ENCODE measurements at regions of chr3 and their contacts with region 1.

Region 1: DNA sequence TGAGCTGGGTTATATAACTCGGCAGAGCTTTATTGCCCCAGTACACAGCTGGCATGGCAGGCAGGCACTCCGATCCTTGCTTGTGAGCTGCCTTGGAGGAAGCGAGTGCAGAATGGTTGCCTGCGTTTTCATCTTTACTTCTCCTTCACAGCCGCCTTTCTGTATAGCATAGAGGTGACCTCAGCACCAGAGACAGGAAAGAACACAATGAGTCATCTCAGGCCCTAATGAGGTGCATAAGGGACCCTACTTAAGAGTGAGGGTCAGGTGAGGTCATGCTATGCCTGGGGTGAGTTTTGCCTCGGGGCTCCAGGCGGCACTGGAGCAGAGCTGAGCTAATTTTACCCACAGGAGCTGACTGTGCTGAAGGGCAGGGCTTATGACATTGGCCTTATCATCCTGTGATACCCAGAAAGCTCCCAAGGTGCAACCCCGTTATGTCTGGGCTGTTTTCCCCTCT is 43.5 kb downstream of the LPP start:
- H3K4me3 Mint-ChIP-seq: no peak overlapping the region
- H3K27ac Mint-ChIP-seq: peak overlapping the region; percentile 82
- H3K4me1 Mint-ChIP-seq: peaks cover 91% of the 10 kb centered on the region
- H3K27me3 Mint-ChIP-seq: no peaks in the 10 kb centered on the region

Region 2: GRCh38 chr3:187745201-187746058 is 452.0 kb before region 1 on chr3 and contains the start of gene BCL6:
- intact Hi-C with region 1: no loop called
- H3K4me3 Mint-ChIP-seq: peak within 1 kb of the TSS; percentile 87
- H3K27ac Mint-ChIP-seq: peak within 1 kb of the TSS; percentile 100
- H3K4me1 Mint-ChIP-seq: peaks cover 49% of the 10 kb centered on the region
- H3K27me3 Mint-ChIP-seq: no peaks in the 10 kb centered on the region

Region 3: GRCh38 chr3:188133219-188133618 is 64.2 kb before region 1 on chr3:
- intact Hi-C with region 1: no loop called
- H3K4me3 Mint-ChIP-seq: no peak overlapping the region
- H3K27ac Mint-ChIP-seq: no peak overlapping the region
- H3K4me1 Mint-ChIP-seq: peaks cover 18% of the 10 kb centered on the region
- H3K27me3 Mint-ChIP-seq: no peaks in the 10 kb centered on the region

Region 4: DNA sequence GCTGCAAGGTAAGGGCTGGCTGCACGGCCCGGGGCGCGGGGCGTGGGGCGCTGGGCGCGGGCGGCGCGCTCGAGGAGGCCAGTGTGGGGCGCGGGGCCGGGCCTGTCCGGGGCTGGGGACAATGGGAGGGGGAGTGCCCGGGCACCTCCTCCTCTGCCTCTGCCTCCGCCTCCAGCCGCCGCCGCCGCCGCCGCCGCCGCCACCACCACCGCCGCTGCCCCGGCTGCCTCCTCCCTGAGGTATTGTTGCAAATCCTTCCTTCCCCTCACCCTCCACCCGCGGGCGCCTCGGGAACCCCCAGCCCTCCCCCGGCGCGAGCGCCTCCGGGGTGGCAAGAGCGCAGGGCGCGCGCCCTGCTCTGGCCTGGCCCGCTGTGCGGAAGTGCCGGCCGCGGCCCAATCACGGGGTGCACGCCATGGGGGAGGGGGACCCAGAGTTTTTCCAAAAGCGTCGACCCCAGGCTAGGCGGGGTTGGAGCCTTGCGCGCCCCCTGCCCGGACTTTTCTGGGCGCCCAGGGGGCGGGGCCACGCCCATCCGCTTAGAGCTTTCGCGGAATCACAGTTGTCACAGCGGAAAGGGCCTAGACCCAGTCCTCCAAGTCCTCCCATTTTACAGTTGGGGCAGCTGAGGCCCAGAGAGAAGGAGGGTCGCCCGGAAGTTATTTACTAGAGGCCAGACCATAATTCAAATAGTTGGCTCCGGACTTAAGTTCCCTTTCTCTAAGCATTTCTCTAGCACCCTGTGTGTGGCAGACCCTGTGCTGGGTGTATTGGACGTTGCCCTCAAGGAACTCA is 43.2 kb before region 1 on chr3 and contains the start of gene LPP:
- intact Hi-C with region 1: loop called (anchors 5 kb)
- H3K4me3 Mint-ChIP-seq: peak within 1 kb of the TSS; percentile 99
- H3K27ac Mint-ChIP-seq: peak within 1 kb of the TSS; percentile 97
- H3K4me1 Mint-ChIP-seq: peaks cover 59% of the 10 kb centered on the region
- H3K27me3 Mint-ChIP-seq: no peaks in the 10 kb centered on the region

Region 5: DNA sequence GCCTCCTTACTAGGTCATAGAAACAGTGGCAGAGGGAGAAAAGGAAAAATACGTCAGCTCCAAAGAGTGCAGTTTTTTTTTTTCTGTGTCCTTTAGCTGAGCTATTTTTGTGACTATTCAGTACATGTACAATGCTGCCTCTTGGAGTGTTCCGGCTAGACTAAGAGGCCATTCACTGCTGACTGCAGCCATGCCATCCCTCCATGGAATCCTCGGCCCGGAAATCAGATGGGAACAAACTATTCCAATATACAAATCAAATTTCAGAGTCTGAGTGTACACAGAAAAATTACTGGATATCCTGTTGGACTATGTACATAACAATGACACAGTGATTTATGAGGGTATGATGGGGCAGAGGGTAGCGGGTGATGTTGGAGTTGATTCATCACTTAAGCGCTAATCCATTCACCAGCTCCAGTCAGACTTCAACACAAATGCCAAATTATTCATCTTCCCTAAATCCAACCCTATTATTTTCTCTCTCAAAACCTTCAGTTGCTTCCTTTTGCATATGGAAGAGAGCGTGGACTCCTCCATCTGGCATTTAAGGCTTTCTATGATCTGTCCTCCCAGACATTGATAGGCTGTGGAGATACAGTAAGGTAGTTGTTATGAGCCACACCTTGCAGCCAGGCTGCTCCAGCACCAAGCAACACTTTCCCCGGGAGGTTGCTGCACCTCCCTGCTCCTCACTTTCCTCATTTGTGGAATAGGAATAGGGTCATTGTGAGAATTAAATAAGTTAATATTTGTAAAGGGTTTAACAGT is 65.7 kb after region 1 on chr3:
- intact Hi-C with region 1: loop called (anchors 10 kb)
- H3K4me3 Mint-ChIP-seq: no peak overlapping the region
- H3K27ac Mint-ChIP-seq: peak overlapping the region; percentile 66
- H3K4me1 Mint-ChIP-seq: peaks cover 17% of the 10 kb centered on the region
- H3K27me3 Mint-ChIP-seq: no peaks in the 10 kb centered on the region